Naive thymus-derived CD4-positive, alpha-beta T cell (primary cell): ENCODE measurements at regions of chr1 and their contacts with region 1.

Region 1: GRCh38 chr1:38873027-38873969 is at the start of gene MYCBP:
- DNase-seq: peak; percentile 95 to 99 (median 98)
- ATAC-seq: peak; percentile 100
- H3K4me3 ChIP-seq: peak within 1 kb of the TSS; percentile 90
- H3K4me3 Mint-ChIP-seq: peak within 1 kb of the TSS; percentile 83 to 96 (median 92)
- H3K27ac ChIP-seq: peak within 1 kb of the TSS; percentile 90
- H3K27ac Mint-ChIP-seq: peak within 1 kb of the TSS; percentile 75 to 97 (median 87)
- H3K4me1 ChIP-seq: peaks cover 10 to 16% of the 10 kb centered on the region in 2 donors
- H3K4me1 Mint-ChIP-seq: peaks cover 13 to 40% (median 30%) of the 10 kb centered on the region in 7 donors
- H3K27me3 ChIP-seq: no peaks in the 10 kb centered on the region
- H3K27me3 Mint-ChIP-seq: no peaks in the 10 kb centered on the region
- total RNA-seq, gene MYCBP: 6.1 to 38.2 (median 11.7) TPM

Region 2: DNA sequence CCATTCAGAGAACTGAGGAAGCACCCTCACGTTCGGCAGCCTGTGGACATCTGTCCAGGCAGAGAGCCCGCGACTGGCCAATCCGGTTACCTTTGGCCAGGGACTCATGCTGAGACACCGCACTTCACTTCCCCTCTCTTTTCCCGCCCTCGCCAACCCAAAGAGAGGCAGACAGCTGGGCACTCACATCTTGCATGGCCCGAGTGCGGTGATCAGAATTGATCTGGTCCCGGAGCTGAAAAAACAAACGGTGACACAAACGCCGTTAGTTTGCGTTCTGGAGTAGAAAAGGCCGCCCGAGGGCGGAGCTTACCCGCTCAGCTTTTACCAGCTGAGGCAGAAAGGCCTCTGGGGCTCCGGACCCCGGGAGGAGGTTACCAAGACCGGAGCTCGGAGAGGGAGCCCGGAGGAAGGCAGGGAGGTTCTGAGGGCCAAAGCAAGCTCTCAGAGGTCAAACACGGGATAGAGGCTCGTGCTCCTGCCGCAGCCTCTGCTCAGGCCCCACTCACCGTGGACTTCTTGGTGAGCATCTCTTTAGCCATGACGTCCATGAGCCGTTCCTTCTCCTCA is 883.9 kb before region 1 on chr1:
- CTCF ChIA-PET with region 1: no interaction called
- POLR2A ChIA-PET with region 1: interaction called, 3 read pairs
- intact Hi-C with region 1: loop called in 1 of 2 experiments (anchors 1 kb)
- DNase-seq: peak in 2 of 9 donors; percentile 46 to 47
- ATAC-seq: peak; percentile 33
- H3K4me3 ChIP-seq: peak overlapping the region; percentile 97
- H3K4me3 Mint-ChIP-seq: peak overlapping the region; percentile 89 to 100 (median 99)
- H3K27ac ChIP-seq: peak overlapping the region; percentile 79
- H3K27ac Mint-ChIP-seq: peak overlapping the region; percentile 87 to 99 (median 91)
- H3K4me1 ChIP-seq: peaks cover 13 to 17% of the 10 kb centered on the region in 2 donors
- H3K4me1 Mint-ChIP-seq: peaks cover 16 to 30% (median 24%) of the 10 kb centered on the region in 7 donors
- H3K27me3 ChIP-seq: no peaks in the 10 kb centered on the region
- H3K27me3 Mint-ChIP-seq: no peaks in the 10 kb centered on the region

Region 3: GRCh38 chr1:38859561-38860453 is 13.5 kb before region 1 on chr1 and contains the start of gene RRAGC:
- CTCF ChIA-PET with region 1: no interaction called
- POLR2A ChIA-PET with region 1: interaction called, 30 read pairs
- intact Hi-C with region 1: loop called (anchors 1 kb)
- DNase-seq: peak; percentile 92 to 98 (median 96)
- ATAC-seq: peak; percentile 99
- H3K4me3 ChIP-seq: peak within 1 kb of the TSS; percentile 70
- H3K4me3 Mint-ChIP-seq: peak within 1 kb of the TSS; percentile 92 to 99 (median 96)
- H3K27ac ChIP-seq: peak within 1 kb of the TSS; percentile 78
- H3K27ac Mint-ChIP-seq: peak within 1 kb of the TSS; percentile 76 to 98 (median 88)
- H3K4me1 ChIP-seq: peaks cover 20 to 22% of the 10 kb centered on the region in 2 donors
- H3K4me1 Mint-ChIP-seq: peaks cover 29 to 88% (median 61%) of the 10 kb centered on the region in 7 donors
- H3K27me3 ChIP-seq: no peaks in the 10 kb centered on the region
- H3K27me3 Mint-ChIP-seq: no peaks in the 10 kb centered on the region
- total RNA-seq, gene RRAGC: 14.5 to 24.4 (median 16.8) TPM

Region 4: DNA sequence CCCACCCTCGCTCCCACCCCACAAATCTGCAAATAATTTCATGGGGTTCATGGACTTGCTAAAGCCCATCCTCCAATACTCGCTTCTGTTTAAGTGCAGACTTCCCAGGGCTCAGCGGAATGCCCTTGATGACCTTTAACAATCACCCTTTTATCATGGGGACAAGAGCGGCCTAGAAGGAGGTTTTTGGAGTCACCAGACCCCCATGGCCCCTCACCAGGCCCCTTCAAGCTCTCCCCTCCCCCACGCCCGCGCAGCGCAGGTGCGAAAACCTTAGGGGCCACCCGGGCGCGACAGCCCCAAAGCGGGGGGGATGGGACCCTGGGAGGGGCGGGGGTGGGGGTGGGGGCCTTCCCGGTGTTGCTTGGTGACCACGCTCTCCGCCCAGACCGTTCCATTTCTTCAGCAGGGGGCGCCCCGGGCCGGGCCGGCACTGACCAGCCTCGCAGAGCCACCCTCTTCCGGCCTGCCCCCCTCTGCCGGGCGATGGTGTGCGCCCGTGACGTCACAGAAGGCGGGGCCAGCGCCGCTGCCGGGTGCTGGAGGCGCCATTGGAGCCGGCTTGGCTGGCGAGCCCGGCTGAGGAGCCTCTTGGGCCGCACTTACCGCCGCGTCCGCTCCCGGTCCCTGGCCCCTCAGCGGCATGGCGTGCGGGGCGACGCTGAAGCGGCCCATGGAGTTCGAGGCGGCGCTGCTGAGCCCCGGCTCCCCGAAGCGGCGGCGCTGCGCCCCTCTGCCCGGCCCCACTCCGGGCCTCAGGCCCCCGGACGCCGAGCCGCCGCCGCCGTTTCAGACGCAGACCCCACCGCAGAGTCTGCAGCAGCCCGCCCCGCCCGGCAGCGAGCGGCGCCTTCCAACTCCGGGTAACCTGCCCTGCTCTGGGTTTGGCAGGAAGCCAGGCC is 117.7 kb after region 1 on chr1 and contains the start of gene AKIRIN1:
- CTCF ChIA-PET with region 1: no interaction called
- POLR2A ChIA-PET with region 1: interaction called, 6 read pairs
- intact Hi-C with region 1: loop called (anchors 1 to 5 kb)
- DNase-seq: peak; percentile 82 to 100 (median 89)
- ATAC-seq: peak; percentile 98
- H3K4me3 ChIP-seq: peak within 1 kb of the TSS; percentile 82
- H3K4me3 Mint-ChIP-seq: peak within 1 kb of the TSS; percentile 80 to 95 (median 90)
- H3K27ac ChIP-seq: peak within 1 kb of the TSS; percentile 99
- H3K27ac Mint-ChIP-seq: peak within 1 kb of the TSS; percentile 84 to 95 (median 91)
- H3K4me1 ChIP-seq: peaks cover 14 to 32% of the 10 kb centered on the region in 2 donors
- H3K4me1 Mint-ChIP-seq: peaks cover 24 to 52% (median 42%) of the 10 kb centered on the region in 7 donors
- H3K27me3 ChIP-seq: no peaks in the 10 kb centered on the region
- H3K27me3 Mint-ChIP-seq: peaks cover 0 to 4% (median 0%) of the 10 kb centered on the region in 5 donors
- total RNA-seq, gene AKIRIN1: 63.7 to 74.7 (median 70.2) TPM

Region 5: GRCh38 chr1:39091845-39092645 is 218.7 kb after region 1 on chr1:
- CTCF ChIA-PET with region 1: no interaction called
- POLR2A ChIA-PET with region 1: no interaction called
- intact Hi-C with region 1: loop called in 1 of 2 experiments (anchors 1 kb)
- DNase-seq: peak in 8 of 9 donors; percentile 33 to 61 (median 46)
- ATAC-seq: peak; percentile 82
- H3K4me3 ChIP-seq: no peak overlapping the region
- H3K4me3 Mint-ChIP-seq: peak overlapping the region in 1 of 10 donors; percentile 51
- H3K27ac ChIP-seq: no peak overlapping the region
- H3K27ac Mint-ChIP-seq: no peak overlapping the region
- H3K4me1 ChIP-seq: no peaks in the 10 kb centered on the region
- H3K4me1 Mint-ChIP-seq: peaks cover 4 to 11% (median 5%) of the 10 kb centered on the region in 7 donors
- H3K27me3 ChIP-seq: no peaks in the 10 kb centered on the region
- H3K27me3 Mint-ChIP-seq: peaks cover 0 to 5% (median 3%) of the 10 kb centered on the region in 5 donors

Region 6: GRCh38 chr1:39501666-39502065 is 628.4 kb after region 1 on chr1:
- CTCF ChIA-PET with region 1: no interaction called
- POLR2A ChIA-PET with region 1: no interaction called
- intact Hi-C with region 1: no loop called
- DNase-seq: no peak
- ATAC-seq: no peak
- H3K4me3 ChIP-seq: no peak overlapping the region
- H3K4me3 Mint-ChIP-seq: no peak overlapping the region
- H3K27ac ChIP-seq: no peak overlapping the region
- H3K27ac Mint-ChIP-seq: no peak overlapping the region
- H3K4me1 ChIP-seq: no peaks in the 10 kb centered on the region
- H3K4me1 Mint-ChIP-seq: no peaks in the 10 kb centered on the region
- H3K27me3 ChIP-seq: no peaks in the 10 kb centered on the region
- H3K27me3 Mint-ChIP-seq: peaks cover under 1 to 5% (median 5%) of the 10 kb centered on the region in 5 donors

Region 7: DNA sequence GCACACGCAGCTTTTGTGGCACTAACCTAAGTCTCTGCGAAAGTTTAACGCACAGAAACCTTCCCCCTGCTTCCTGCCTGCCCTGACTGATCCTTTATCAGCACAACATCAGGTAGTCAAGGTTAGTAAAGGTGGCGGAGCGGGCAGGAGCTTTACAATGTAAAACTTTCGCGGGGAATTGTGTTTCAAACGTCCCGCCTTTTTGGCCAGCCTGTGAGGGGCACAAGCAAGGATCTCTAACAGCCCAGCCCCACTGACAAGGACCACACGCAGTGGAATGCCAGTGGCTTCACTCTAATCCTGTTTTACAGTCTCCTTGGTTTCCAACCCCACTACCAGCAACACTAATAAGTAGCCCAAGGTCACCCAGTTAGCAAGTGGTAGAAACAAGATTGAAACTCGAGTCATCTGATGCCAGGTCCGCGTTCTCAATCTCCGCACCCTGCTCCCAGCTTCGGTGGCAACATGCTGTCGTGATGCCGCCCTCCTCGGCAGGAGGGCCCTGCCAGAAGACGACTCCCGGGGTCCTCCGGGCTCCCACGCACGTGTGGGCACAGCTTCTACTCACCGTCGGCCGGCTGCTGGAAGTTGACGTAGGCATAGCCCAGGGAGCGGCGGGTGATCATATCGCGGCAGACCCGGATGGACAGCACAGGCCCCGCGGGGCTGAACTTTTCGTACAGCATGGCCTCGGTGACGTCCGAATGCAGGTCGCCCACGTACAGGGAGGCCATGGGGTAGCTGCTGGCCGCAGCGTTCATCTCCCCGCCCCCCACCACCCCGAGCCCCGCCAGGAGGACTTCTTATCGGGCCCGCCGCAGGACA is 702.1 kb after region 1 on chr1:
- CTCF ChIA-PET with region 1: no interaction called
- POLR2A ChIA-PET with region 1: no interaction called
- intact Hi-C with region 1: loop called in 1 of 2 experiments (anchors 5 kb)
- DNase-seq: peak; percentile 25 to 72 (median 57)
- ATAC-seq: peak; percentile 45
- H3K4me3 ChIP-seq: peak overlapping the region; percentile 68
- H3K4me3 Mint-ChIP-seq: peak overlapping the region; percentile 86 to 98 (median 91)
- H3K27ac ChIP-seq: peak overlapping the region; percentile 89
- H3K27ac Mint-ChIP-seq: peak overlapping the region; percentile 79 to 96 (median 93)
- H3K4me1 ChIP-seq: peaks cover 18 to 26% of the 10 kb centered on the region in 2 donors
- H3K4me1 Mint-ChIP-seq: peaks cover 19 to 52% (median 49%) of the 10 kb centered on the region in 7 donors
- H3K27me3 ChIP-seq: no peaks in the 10 kb centered on the region
- H3K27me3 Mint-ChIP-seq: no peaks in the 10 kb centered on the region

Region 8: GRCh38 chr1:39738622-39739366 is 865.5 kb after region 1 on chr1 and contains the start of gene PPIE:
- CTCF ChIA-PET with region 1: no interaction called
- POLR2A ChIA-PET with region 1: interaction called, 3 read pairs
- intact Hi-C with region 1: loop called in 1 of 2 experiments (anchors 2 kb)
- DNase-seq: peak; percentile 71 to 88 (median 85)
- ATAC-seq: peak; percentile 99
- H3K4me3 ChIP-seq: peak within 1 kb of the TSS; percentile 88
- H3K4me3 Mint-ChIP-seq: peak within 1 kb of the TSS; percentile 86 to 98 (median 96)
- H3K27ac ChIP-seq: peak within 1 kb of the TSS; percentile 74
- H3K27ac Mint-ChIP-seq: peak within 1 kb of the TSS; percentile 92 to 97 (median 96)
- H3K4me1 ChIP-seq: peaks cover 16 to 17% of the 10 kb centered on the region in 2 donors
- H3K4me1 Mint-ChIP-seq: peaks cover 21 to 44% (median 38%) of the 10 kb centered on the region in 7 donors
- H3K27me3 ChIP-seq: no peaks in the 10 kb centered on the region
- H3K27me3 Mint-ChIP-seq: peaks cover 2 to 16% (median 11%) of the 10 kb centered on the region in 5 donors
- total RNA-seq, gene PPIE: 52.3 to 79.1 (median 61.3) TPM